Heart right ventricle (tissue), 16 donors: ENCODE measurements at regions of chr20 and their contacts with region 1.

Region 1: DNA sequence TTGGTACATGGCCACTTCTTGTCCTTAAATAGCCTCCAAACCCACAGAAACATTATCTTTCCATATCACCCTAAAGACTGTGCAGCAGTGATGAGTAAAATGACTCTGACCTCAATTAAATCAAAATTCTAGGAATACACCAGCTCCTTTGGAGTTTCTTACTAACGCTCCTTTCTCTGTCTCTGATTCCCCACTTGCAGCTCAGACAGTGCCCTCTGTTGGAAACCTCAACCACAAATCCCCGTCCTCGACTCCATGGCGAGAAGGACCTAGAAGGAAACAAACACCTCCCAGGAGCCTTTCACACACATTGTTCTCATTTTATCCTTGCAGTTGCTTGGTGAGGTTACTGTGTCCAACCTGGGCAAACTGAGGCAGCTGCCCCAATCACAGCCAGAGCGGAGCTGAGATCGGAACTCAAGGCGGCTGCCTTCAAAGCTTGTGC is 17.7 kb upstream of the PARD6B start:
- DNase-seq: no peak
- ATAC-seq: peak in 7 of 8 donors; percentile 36 to 73 (median 61)
- H3K4me3 ChIP-seq: no peak overlapping the region
- H3K27ac ChIP-seq: no peak overlapping the region
- H3K4me1 ChIP-seq: peaks cover 0 to 11% (median 0%) of the 10 kb centered on the region in 9 donors
- H3K27me3 ChIP-seq: no peaks in the 10 kb centered on the region
- CTCF ChIP-seq: peak; percentile 7 to 66 (median 48)

Region 2: GRCh38 chr20:50625986-50626677 is 87.5 kb before region 1 on chr20:
- intact Hi-C with region 1: loop called in 1 of 10 experiments (anchors 1 kb)
- DNase-seq: peak; percentile 58 to 72
- ATAC-seq: peak; percentile 54 to 82 (median 70)
- H3K4me3 ChIP-seq: no peak overlapping the region
- H3K27ac ChIP-seq: peak overlapping the region in 5 of 10 donors; percentile 18 to 46 (median 34)
- H3K4me1 ChIP-seq: peaks cover 0 to 27% (median 12%) of the 10 kb centered on the region in 9 donors
- H3K27me3 ChIP-seq: no peaks in the 10 kb centered on the region
- CTCF ChIP-seq: peak; percentile 31 to 75 (median 63)

Region 3: GRCh38 chr20:50655311-50655880 is 58.3 kb before region 1 on chr20:
- intact Hi-C with region 1: loop called in 3 of 10 experiments (anchors 10 kb)
- DNase-seq: peak; percentile 74 to 76
- ATAC-seq: peak; percentile 70 to 83 (median 78)
- H3K4me3 ChIP-seq: peak overlapping the region in 5 of 10 donors; percentile 1 to 36 (median 11)
- H3K27ac ChIP-seq: peak overlapping the region; percentile 9 to 87 (median 78)
- H3K4me1 ChIP-seq: peaks cover 5 to 61% (median 46%) of the 10 kb centered on the region in 9 donors
- H3K27me3 ChIP-seq: no peaks in the 10 kb centered on the region
- CTCF ChIP-seq: no peak

Region 4: DNA sequence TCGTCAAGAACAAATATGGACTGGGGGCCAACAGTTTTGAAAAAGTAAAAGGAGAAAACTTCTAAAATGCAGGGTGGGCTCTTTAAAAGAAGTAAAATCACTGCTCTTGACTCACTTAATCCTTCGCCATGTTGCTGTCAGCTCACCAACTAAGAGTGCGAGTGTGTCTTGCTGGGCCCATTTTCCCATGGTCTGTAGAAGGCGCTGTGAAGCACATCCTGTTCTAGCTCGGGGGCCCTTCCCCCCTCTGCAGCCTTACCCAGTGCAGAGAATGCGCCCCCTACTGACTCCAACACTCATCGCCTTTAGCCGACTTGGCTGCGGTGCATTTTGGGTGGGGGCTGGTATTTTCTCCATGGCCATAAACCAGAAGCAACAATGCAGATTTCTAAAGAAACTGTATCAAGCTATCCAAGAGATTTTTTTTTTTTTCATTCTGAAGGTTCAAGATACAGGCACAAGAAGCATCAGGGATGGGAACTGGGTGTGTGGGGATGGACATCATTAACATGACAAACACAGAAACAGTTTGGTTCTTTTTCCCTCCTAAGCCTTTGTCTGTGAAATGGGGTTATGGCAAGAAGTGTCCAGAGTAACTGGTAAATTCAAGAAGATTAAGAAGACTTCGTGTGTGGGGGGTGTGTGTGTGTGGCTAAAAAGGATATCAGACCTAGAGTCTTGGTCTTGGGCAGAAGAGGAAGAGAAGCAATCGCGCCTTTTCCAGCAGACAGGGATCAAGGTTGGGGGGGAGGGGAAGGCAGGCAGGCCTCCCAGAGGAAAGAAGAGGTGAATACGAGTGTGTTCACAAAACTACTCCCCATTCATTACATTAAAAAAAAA is 215.8 kb after region 1 on chr20:
- intact Hi-C with region 1: no loop called
- DNase-seq: peak; percentile 74 to 90
- ATAC-seq: peak; percentile 36 to 74 (median 70)
- H3K4me3 ChIP-seq: peak overlapping the region; percentile 70 to 94 (median 78)
- H3K27ac ChIP-seq: peak overlapping the region in 8 of 10 donors; percentile 74 to 100 (median 81)
- H3K4me1 ChIP-seq: peaks cover 0 to 61% (median 51%) of the 10 kb centered on the region in 9 donors
- H3K27me3 ChIP-seq: no peaks in the 10 kb centered on the region
- CTCF ChIP-seq: peak; percentile 53 to 92 (median 79)